GM18951 (cell line): ENCODE measurements at regions of chr9 and their contacts with region 1.

Region 1: DNA sequence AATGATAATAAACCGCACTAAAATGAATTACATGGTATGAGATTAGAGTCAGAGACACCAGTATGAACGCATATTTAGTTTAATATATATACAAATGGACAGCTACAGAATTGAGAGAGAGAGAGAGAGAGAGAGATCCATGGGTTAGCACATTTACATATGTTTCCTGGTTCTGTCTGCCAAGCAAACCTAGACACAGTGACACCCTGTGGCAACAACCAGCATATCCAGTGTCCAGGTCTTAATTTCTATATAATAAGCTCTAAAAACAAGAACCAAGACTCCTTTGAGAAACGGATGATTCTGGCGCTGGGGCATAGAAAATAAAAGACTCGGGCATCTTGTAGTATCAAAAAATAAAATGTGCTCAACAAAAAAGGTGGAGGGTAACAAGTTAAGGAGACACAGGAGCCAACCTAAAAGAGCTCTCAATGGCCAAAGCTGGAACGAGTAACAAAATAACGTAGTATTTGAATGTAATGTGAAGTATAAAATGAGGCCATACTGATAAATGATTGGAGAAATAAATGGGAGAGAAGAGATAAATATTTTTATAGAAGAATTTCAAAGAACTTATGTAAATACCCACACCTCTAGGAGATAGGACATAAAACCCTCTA is 84.5 kb downstream of the RFX3 start:
- POLR2A ChIP-seq: no peak

Region 2: GRCh38 chr9:2787065-2787464 is 654.2 kb before region 1 on chr9:
- in situ Hi-C with region 1: no loop called
- POLR2A ChIP-seq: no peak

Region 3: GRCh38 chr9:2800393-2801179 is 640.7 kb before region 1 on chr9:
- in situ Hi-C with region 1: no loop called
- POLR2A ChIP-seq: no peak

Region 4: GRCh38 chr9:2907411-2907810 is 533.9 kb before region 1 on chr9:
- in situ Hi-C with region 1: no loop called
- POLR2A ChIP-seq: no peak

Region 5: GRCh38 chr9:3240656-3241268 is 200.5 kb before region 1 on chr9:
- in situ Hi-C with region 1: loop called (anchors 25 kb)
- POLR2A ChIP-seq: no peak